Endothelial cell of umbilical vein (primary cell): ENCODE measurements at regions of chr11 and their contacts with region 1.

Region 1: DNA sequence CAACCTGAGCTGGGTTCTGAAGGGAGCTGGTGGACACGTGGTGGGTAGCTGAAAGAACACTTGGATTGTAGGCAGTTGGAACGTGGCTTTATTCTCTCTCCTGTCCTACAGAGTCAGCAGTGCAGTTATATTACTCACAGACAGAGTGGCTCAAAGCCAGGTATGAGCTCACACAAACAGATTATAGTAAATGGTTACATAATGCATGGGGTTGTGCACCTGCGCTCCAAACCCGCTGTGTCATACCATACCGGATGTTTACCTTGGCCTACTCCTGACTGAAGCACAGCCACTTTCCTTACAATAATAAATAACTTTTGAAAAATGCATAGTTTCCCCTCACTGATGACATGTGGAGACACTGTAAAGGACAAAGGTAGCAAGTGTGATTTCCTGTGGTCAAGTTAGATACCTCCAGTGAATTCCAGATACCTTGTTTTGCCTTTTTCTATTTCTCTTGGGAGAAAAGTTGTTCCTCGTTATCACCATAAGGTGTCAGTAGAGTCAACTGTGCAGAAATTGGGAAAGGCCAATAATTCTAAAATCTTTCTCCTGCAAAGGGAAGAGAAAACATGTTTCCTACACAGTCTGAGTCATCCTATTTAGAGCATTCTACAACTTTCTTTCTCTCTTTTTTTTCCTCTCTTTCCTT is 13.5 kb downstream of the MS4A6A start:
- DNase-seq: peak; percentile 100
- H3K4me3 ChIP-seq: no peak overlapping the region
- H3K27ac ChIP-seq: peak overlapping the region; percentile 86
- H3K4me1 ChIP-seq: peaks cover 46% of the 10 kb centered on the region
- H3K27me3 ChIP-seq: no peaks in the 10 kb centered on the region
- CTCF ChIP-seq: peak; percentile 62 to 63
- POLR2A ChIP-seq: peak; percentile 93

Region 2: DNA sequence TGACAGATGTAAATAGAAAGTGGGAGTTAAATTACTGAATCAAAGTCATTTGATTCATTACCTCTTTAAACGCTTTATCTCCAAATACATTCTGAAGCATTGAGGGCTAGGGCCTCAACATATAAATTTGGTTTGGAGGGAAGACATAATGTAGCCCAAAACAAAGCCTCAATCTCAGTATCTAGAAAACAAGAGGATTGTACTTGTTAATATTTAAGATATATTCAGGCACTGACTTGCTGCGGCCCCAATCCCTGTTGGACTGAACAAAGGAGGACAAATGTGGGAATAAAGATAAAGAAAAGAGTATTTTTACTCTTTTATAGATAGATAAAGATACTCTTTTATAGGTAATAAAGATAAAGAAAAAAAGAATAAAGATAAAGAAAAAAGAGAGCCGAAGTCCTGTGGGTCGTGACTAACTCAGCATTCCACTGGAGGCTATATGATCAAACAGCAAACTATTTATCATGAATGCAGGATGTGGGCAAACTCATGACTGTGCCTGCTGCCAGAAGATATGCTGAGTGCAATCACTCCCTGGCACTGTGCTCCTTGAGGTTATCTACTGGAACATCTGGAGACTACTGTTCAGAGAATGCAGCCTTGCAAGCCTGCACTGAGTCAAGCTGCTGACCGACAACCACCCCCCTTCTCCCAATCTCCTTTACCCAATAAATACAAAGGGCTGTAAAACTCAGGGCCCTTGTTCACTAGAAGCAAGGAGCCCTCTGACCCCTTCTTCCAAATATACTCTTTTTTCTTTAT is 462.7 kb before region 1 on chr11:
- CTCF ChIA-PET with region 1: no interaction called
- POLR2A ChIA-PET with region 1: no interaction called
- dilution Hi-C with region 1: no loop called
- intact Hi-C with region 1: loop called (anchors 1 kb)
- DNase-seq: peak; percentile 95
- H3K4me3 ChIP-seq: no peak overlapping the region
- H3K27ac ChIP-seq: peak overlapping the region; percentile 93
- H3K4me1 ChIP-seq: peaks cover 18% of the 10 kb centered on the region
- H3K27me3 ChIP-seq: no peaks in the 10 kb centered on the region
- CTCF ChIP-seq: no peak
- POLR2A ChIP-seq: peak; percentile 86

Region 3: GRCh38 chr11:59918987-59919589 is 250.3 kb before region 1 on chr11:
- CTCF ChIA-PET with region 1: interaction called, 10 read pairs
- POLR2A ChIA-PET with region 1: no interaction called
- dilution Hi-C with region 1: no loop called
- intact Hi-C with region 1: loop called (anchors 1 kb)
- DNase-seq: peak; percentile 72
- H3K4me3 ChIP-seq: no peak overlapping the region
- H3K27ac ChIP-seq: no peak overlapping the region
- H3K4me1 ChIP-seq: no peaks in the 10 kb centered on the region
- H3K27me3 ChIP-seq: no peaks in the 10 kb centered on the region
- CTCF ChIP-seq: peak; percentile 38 to 39
- POLR2A ChIP-seq: no peak

Region 4: GRCh38 chr11:59981106-59981770 is 188.2 kb before region 1 on chr11:
- CTCF ChIA-PET with region 1: no interaction called
- POLR2A ChIA-PET with region 1: no interaction called
- dilution Hi-C with region 1: no loop called
- intact Hi-C with region 1: no loop called
- DNase-seq: no peak
- H3K4me3 ChIP-seq: no peak overlapping the region
- H3K27ac ChIP-seq: no peak overlapping the region
- H3K4me1 ChIP-seq: no peaks in the 10 kb centered on the region
- H3K27me3 ChIP-seq: peaks cover 5% of the 10 kb centered on the region in 2 experiments
- CTCF ChIP-seq: no peak
- POLR2A ChIP-seq: no peak

Region 5: DNA sequence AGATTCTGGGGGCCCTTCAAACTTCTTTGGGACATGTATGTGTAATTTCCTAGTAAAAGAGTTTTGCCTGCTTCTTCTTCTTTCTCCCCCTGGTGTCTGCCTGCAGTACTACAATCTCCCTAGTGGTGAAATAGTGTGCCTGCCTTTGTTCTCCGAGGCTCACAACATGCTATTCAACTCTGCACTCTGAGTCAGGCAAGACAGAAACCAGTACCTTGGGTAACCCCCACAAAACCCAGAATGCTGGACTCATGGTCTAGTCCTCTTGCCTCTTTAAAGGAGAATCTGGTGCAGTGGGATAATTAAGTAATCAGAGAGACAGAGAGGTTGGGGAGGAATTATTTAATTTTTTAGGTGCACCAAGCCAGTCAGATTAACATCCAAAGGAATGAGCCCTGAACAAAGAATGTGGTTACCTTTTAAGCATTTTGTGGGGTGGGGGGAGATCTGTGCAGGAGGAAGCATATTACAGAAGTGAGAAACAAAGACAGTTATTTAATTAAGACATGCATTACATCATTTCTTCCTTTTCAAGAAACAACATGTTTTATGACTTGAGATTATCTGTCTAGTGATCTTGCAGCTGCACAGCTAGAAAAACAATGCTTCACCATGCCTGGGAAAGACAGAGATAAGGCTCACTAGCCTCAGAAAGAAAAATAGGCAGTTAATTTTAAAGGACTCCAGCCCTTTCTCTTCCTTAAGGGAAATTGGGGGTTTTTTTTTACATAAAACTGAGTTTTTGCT is 24.5 kb after region 1 on chr11:
- CTCF ChIA-PET with region 1: interaction called, 40 read pairs
- POLR2A ChIA-PET with region 1: interaction called, 5 read pairs
- dilution Hi-C with region 1: no loop called
- intact Hi-C with region 1: loop called (anchors 1 kb)
- DNase-seq: peak; percentile 98
- H3K4me3 ChIP-seq: no peak overlapping the region
- H3K27ac ChIP-seq: peak overlapping the region; percentile 92
- H3K4me1 ChIP-seq: peaks cover 37% of the 10 kb centered on the region
- H3K27me3 ChIP-seq: no peaks in the 10 kb centered on the region
- CTCF ChIP-seq: peak; percentile 97
- POLR2A ChIP-seq: peak; percentile 21

Region 6: GRCh38 chr11:60265373-60266214 is 96.2 kb after region 1 on chr11:
- CTCF ChIA-PET with region 1: interaction called, 13 read pairs
- POLR2A ChIA-PET with region 1: no interaction called
- dilution Hi-C with region 1: no loop called
- intact Hi-C with region 1: loop called (anchors 1 kb)
- DNase-seq: peak; percentile 83
- H3K4me3 ChIP-seq: no peak overlapping the region
- H3K27ac ChIP-seq: no peak overlapping the region
- H3K4me1 ChIP-seq: no peaks in the 10 kb centered on the region
- H3K27me3 ChIP-seq: peaks cover 11 to 20% of the 10 kb centered on the region in 2 experiments
- CTCF ChIP-seq: peak; percentile 36 to 42
- POLR2A ChIP-seq: no peak

Region 7: DNA sequence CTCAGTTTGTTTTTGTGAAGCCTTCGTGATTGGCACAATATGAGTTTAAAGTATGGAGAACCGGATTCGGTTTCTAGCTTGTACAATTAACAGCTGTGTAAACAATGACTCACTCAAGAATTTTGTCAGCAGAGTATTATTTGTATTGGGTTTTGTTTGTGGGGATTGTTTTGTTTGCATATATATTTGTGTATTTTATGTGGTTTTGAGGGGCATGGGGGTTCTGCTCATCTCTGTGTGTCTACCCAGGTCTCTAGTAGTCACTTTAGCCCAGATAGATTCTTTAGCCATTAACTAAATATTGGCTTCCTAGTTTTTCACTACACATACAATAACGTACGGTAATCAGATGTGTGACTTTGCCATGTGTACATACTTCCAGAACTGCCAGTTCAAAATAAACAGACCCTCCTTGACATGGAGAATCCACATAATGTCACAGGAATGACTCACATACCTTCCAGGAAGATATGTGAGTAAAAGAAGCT is 201.5 kb after region 1 on chr11:
- CTCF ChIA-PET with region 1: no interaction called
- POLR2A ChIA-PET with region 1: no interaction called
- dilution Hi-C with region 1: no loop called
- intact Hi-C with region 1: loop called (anchors 2 kb)
- DNase-seq: peak; percentile 72
- H3K4me3 ChIP-seq: no peak overlapping the region
- H3K27ac ChIP-seq: peak overlapping the region; percentile 35
- H3K4me1 ChIP-seq: peaks cover 16% of the 10 kb centered on the region
- H3K27me3 ChIP-seq: peaks cover 3 to 6% of the 10 kb centered on the region in 2 experiments
- CTCF ChIP-seq: no peak
- POLR2A ChIP-seq: no peak

Region 8: GRCh38 chr11:60924110-60924905 is 754.9 kb after region 1 on chr11 and contains the start of gene TMEM132A:
- CTCF ChIA-PET with region 1: no interaction called
- POLR2A ChIA-PET with region 1: no interaction called
- dilution Hi-C with region 1: no loop called
- intact Hi-C with region 1: no loop called
- DNase-seq: peak; percentile 61
- H3K4me3 ChIP-seq: peak within 1 kb of the TSS; percentile 39 to 80 (median 44)
- H3K27ac ChIP-seq: no peak within 1 kb of the TSS
- H3K4me1 ChIP-seq: peaks cover 17% of the 10 kb centered on the region
- H3K27me3 ChIP-seq: no peaks in the 10 kb centered on the region
- CTCF ChIP-seq: peak in 1 of 2 donors; percentile 4
- POLR2A ChIP-seq: no peak
- total RNA-seq, gene TMEM132A: 106 and 120 TPM in 2 replicates